Activated naive CD4-positive, alpha-beta T cell treated with anti-CD3 and anti-CD28 coated beads for 36 hours (primary cell): ENCODE measurements at regions of chr21 and their contacts with region 1.

Region 1: DNA sequence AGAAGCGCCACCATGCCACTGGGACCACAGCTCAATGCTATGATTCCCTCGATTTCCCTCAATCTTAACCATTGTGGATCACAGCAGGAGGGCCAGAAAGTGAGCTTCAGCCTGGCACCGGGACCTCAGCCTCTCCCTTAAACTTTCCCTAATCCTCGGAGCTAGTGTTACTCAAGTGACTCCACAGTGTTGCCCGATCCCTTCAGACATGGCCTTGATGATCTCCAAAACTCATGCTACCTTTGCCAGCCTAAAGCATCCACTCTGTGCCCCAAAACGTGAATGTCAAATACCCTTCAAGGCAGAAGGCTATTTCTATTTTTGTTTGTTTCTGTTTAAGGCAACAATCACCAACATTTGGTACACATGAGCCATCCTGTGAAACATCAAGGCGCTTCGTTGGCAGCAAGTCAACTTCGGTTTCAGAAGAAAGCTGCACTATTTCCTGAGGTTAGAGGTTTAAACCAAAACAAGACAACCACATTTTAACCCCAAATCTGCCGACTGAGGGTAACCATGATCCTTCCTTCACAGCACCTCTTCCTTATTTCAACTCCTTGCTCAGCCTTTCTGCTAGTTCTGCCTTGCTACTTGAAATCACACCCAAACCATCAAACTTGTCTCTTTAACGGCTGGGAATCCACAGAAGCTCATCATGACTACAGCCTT is 94.4 kb upstream of the KRTAP19-8 start:
- DNase-seq: peak; percentile 89
- H3K4me3 Mint-ChIP-seq: peak overlapping the region; percentile 32
- H3K27ac Mint-ChIP-seq: peak overlapping the region; percentile 83
- H3K4me1 Mint-ChIP-seq: peaks cover 64% of the 10 kb centered on the region
- H3K27me3 Mint-ChIP-seq: no peaks in the 10 kb centered on the region

Region 2: DNA sequence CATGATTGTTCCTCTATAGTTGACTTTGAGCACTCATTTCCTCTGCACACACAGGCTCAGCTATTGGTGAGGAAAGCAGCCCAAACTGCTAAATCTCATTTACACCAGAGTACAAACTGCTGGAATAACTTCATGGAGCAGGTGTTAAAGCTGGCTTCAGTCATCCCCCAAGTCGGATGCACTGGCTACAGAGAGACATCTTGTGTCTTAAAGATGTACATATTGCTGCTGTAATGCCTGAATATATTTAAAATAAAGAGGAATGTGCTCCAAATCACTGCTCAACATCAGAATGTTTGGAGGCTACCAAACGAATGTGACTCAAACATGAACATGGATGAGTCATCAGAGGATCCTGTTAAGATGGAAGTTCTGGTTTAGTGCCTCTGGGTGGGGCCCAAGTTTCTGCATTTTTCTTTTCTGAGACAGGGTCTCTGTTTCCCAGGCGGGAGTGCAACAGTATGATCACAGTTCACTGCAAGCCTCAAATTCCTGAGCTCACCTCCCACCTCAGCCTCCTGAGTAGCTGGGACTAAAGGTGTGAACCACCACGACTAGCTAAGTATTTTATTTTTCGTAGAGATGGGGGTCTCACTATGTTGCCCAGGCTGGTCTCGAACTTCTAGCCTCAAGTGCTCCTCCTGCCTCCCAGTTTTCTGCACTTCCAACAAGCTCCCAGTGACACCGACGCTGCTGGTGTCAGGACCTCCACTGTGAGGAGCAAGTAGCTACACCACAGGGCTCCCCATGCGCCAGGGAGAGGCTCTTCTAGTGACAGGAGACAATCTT is 15.4 kb before region 1 on chr21:
- CTCF ChIA-PET with region 1: interaction called, 7 read pairs
- intact Hi-C with region 1: loop called (anchors 1 kb)
- DNase-seq: peak; percentile 42
- H3K4me3 Mint-ChIP-seq: no peak overlapping the region
- H3K27ac Mint-ChIP-seq: peak overlapping the region; percentile 38
- H3K4me1 Mint-ChIP-seq: peaks cover 20% of the 10 kb centered on the region
- H3K27me3 Mint-ChIP-seq: no peaks in the 10 kb centered on the region

Region 3: DNA sequence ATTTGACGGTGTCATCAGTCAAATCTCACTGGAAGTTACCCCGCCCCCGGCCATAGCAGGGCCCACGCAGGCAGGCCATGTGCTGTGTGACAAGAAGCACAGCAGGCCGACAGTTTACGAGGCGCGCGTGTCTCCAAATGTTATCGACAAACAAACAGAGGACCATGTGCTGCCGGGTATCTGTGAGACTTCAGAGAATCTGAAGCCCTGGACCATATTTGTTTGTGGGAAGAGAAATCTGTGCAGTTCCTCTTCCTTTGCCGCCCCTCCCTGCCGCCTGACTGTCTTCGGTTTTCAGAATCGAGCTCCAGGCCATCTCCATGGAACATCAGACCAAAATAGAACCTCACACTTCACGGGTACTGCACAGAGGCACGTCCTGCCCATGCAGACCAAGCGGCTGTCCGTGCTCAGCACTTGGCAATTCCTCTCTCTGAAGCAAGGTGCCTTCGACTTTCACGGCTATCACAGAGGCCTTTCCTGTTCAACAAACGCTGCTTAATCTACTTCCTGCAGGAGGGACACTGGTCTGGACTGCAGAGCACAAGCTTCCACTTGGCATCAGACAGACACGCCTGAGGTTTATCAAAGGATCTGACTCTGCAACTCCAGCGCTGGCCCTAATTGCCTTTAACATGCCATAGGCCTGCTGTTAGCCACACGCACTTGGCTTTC is 41.3 kb after region 1 on chr21:
- CTCF ChIA-PET with region 1: interaction called, 4 read pairs
- intact Hi-C with region 1: loop called (anchors 1 kb)
- DNase-seq: peak; percentile 77
- H3K4me3 Mint-ChIP-seq: peak overlapping the region; percentile 75
- H3K27ac Mint-ChIP-seq: peak overlapping the region; percentile 82
- H3K4me1 Mint-ChIP-seq: peaks cover 88% of the 10 kb centered on the region
- H3K27me3 Mint-ChIP-seq: no peaks in the 10 kb centered on the region

Region 4: DNA sequence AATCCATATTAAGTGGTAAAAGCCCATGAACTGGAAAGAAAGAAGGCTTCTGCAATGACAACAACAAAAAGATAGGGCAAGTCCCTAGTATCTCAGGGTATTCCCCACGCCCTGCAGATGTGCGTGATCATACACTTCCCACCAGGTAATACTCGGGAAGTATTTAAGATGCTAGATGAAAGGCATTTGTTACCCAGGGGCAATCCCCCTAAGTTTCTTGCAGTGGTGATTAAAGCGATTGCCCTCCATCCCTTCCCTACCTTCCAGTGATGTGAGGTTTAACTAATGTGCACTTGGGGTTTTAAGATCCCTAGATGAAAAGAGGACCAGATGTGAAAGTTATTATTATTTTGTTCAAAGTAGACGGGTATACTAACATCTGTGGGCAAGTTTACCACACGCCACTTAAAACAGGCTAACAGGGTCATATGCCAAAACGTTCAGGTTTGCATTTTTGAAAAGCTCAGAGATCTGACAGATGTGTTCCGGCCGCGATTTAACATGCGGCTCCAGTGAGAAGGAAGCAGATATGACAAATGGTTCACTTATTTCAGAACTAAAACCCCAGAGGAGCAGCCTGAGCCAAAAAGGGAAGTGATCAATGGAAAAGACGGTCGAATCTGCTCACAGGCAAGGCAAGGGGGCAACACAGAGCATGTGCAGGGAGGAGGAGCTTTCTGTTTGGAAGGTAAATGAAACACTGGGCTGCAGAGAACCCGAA is 194.0 kb after region 1 on chr21:
- CTCF ChIA-PET with region 1: no interaction called
- intact Hi-C with region 1: loop called (anchors 1 kb)
- DNase-seq: peak; percentile 83
- H3K4me3 Mint-ChIP-seq: peak overlapping the region; percentile 45
- H3K27ac Mint-ChIP-seq: peak overlapping the region; percentile 92
- H3K4me1 Mint-ChIP-seq: peaks cover 37% of the 10 kb centered on the region
- H3K27me3 Mint-ChIP-seq: no peaks in the 10 kb centered on the region

Region 5: GRCh38 chr21:31659536-31660258 is 527.0 kb after region 1 on chr21 and contains the start of gene SOD1:
- CTCF ChIA-PET with region 1: no interaction called
- intact Hi-C with region 1: loop called (anchors 2 kb)
- DNase-seq: peak; percentile 95
- H3K4me3 Mint-ChIP-seq: peak within 1 kb of the TSS; percentile 100
- H3K27ac Mint-ChIP-seq: peak within 1 kb of the TSS; percentile 99
- H3K4me1 Mint-ChIP-seq: peaks cover 68% of the 10 kb centered on the region
- H3K27me3 Mint-ChIP-seq: no peaks in the 10 kb centered on the region
- total RNA-seq, gene SOD1: 281 to 297 TPM